ENCODE measurements at regions of chr12 and their contacts with region 1.

Region 1: GRCh38 chr12:99386907-99387306 is 260.6 kb upstream of the GARIN6 start:
- H3K4me3 ChIP-seq: no peak overlapping the region
- H3K27ac ChIP-seq: no peak overlapping the region
- H3K4me1 ChIP-seq: no peaks in the 10 kb centered on the region
- CTCF ChIP-seq: 0 out of 2 replicates have a peak, but pooled peaks have one; percentile 29

Region 2: GRCh38 chr12:99436584-99436983 is 49.7 kb after region 1 on chr12:
- CTCF ChIA-PET with region 1: no interaction called
- POLR2A ChIA-PET with region 1: no interaction called
- H3K4me3 ChIP-seq: no peak overlapping the region
- H3K27ac ChIP-seq: no peak overlapping the region
- H3K4me1 ChIP-seq: no peaks in the 10 kb centered on the region
- CTCF ChIP-seq: no peak

Region 3: GRCh38 chr12:99455348-99456035 is 68.6 kb after region 1 on chr12:
- CTCF ChIA-PET with region 1: no interaction called
- POLR2A ChIA-PET with region 1: no interaction called
- H3K4me3 ChIP-seq: no peak overlapping the region
- H3K27ac ChIP-seq: no peak overlapping the region
- H3K4me1 ChIP-seq: no peaks in the 10 kb centered on the region
- CTCF ChIP-seq: no peak

Region 4: GRCh38 chr12:99619389-99620158 is 232.7 kb after region 1 on chr12:
- CTCF ChIA-PET with region 1: interaction called, 16 read pairs
- POLR2A ChIA-PET with region 1: no interaction called
- H3K4me3 ChIP-seq: no peak overlapping the region
- H3K27ac ChIP-seq: no peak overlapping the region
- H3K4me1 ChIP-seq: no peaks in the 10 kb centered on the region
- CTCF ChIP-seq: no peak

Region 5: DNA sequence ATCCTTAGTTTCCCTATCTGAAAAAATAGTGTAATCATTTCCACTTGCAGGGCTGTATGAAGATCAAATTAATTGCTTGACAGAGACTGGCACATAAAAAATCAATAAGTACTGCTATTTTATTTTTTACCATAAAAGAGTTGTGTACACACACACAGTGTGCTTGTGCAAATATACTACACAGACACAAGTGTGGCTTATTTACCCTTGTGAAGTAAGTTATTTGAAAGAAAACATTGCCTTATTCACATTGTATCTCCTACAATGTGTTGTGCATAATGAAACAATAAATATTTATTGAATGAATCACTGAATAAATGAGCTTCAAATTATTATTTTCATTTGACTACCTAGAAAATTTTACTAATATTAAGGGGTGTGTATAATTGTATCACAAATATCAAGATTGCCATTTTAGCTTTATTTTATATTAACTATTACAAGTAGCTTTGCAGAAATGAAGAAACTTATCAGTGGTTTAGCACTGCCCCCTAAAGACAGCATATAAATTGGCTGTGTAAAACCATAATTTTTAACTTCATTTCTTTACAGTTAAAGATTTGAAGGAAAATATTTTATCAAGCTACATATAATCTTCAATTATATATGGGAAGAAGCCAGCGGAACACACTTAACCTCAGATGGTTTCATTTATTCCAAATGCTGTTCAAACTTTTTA is 271.9 kb after region 1 on chr12:
- CTCF ChIA-PET with region 1: interaction called, 16 read pairs
- POLR2A ChIA-PET with region 1: no interaction called
- H3K4me3 ChIP-seq: no peak overlapping the region
- H3K27ac ChIP-seq: no peak overlapping the region
- H3K4me1 ChIP-seq: peaks cover 5% of the 10 kb centered on the region; the same call in 1 of the 2 replicates
- CTCF ChIP-seq: no peak